Heart right ventricle (tissue), 16 donors: ENCODE measurements at regions of chr11 and their contacts with region 1.

Region 1: DNA sequence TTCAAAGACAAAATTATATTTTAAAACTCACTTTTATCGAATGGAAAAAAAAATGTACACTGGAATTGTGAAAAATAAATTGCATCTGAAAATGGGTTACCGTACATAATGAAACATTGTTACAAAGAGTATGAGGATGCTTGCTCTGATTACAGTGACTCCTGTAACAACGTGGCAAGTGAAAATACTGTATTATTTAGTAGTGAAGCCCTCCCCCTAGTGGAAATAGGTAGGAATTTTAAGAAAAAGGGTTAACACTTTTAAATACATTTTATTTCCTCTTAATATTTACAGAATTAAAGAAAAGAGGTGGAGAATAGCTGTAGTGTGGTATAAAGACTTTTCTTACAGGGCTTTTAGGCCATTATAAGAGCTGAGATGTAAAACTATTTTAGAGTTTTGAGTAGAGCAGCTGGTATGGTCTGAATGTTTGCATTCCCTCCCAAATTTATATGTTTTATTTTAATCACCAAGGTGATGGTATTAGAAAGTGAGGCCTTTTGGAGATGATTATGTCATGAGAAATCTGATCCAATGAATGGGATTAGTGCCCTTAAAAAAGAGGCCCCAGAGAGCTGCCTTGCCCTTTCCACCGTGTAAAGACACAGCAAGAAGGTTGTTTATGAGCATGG is 25.2 kb downstream of the FAM76B start:
- DNase-seq: no peak
- ATAC-seq: peak in 6 of 8 donors; percentile 50 to 74 (median 58)
- H3K4me3 ChIP-seq: no peak overlapping the region
- H3K27ac ChIP-seq: no peak overlapping the region
- H3K4me1 ChIP-seq: peaks cover 0 to 12% (median 0%) of the 10 kb centered on the region in 9 donors
- H3K27me3 ChIP-seq: peaks cover 0 to 5% (median 0%) of the 10 kb centered on the region in 7 donors
- CTCF ChIP-seq: peak; percentile 44 to 80 (median 74)

Region 2: DNA sequence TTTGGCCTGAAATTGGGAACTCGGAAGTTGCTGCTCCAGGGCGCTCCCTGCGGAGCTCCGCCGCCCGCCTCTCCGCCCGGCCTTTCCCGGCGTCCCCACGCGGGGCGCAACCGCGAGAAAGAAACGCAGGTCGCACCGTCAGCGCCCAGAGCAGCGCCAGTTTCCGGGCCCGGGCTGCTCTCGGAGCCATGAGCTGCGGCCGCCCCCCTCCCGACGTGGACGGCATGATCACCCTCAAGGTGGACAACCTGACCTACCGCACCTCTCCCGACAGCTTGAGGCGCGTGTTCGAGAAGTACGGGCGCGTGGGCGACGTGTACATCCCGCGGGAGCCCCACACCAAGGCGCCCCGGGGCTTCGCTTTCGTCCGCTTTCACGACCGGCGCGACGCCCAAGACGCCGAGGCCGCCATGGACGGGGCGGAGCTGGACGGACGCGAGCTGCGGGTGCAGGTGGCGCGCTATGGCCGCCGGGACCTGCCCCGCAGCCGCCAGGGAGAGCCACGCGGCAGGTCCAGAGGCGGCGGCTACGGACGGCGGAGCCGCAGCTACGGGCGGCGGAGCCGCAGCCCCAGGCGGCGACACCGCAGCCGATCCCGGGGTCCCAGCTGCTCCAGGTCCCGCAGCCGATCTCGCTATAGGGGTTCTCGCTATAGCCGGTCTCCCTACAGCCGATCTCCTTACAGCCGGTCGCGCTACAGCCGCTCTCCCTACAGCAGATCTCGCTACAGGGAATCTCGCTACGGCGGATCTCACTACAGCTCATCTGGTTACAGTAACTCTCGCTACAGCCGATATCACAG is 697.1 kb before region 1 on chr11:
- intact Hi-C with region 1: loop called in 7 of 10 experiments (anchors 5 to 10 kb)
- DNase-seq: peak; percentile 83 to 88
- ATAC-seq: peak; percentile 87 to 95 (median 90)
- H3K4me3 ChIP-seq: peak overlapping the region; percentile 72 to 89 (median 82)
- H3K27ac ChIP-seq: peak overlapping the region; percentile 94 to 99 (median 97)
- H3K4me1 ChIP-seq: peaks cover 0 to 27% (median 20%) of the 10 kb centered on the region in 9 donors
- H3K27me3 ChIP-seq: no peaks in the 10 kb centered on the region
- CTCF ChIP-seq: peak; percentile 50 to 77 (median 61)

Region 3: DNA sequence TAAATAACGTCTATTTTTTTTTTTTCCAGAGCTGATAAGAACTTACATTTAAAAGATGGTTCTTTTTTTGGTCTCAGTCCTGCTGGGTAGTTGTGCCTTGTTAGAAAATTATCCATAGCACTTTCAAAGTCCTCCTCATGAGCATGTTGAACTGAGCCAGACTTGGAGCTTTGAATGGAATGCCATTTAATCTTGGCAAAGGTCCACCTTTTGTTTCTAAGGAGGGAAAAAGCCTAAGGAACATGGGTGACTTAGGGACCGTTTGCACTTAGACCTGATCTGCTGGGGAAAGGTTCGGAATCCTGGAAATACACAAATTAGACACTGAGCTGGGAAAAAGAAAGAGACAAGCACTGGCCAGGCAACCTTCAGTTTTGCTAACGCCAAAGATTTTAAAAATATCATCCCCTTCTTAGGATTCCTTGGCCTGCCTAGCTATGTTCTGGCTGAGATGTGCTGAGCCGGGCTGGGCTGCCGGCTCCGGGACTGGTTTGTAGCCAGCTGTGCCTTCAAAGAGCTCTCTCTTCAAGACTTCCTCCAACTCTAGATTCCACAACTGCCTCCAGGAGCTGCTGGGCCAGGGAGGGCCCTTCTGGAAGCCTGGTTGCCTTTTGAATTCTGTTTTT is 607.4 kb before region 1 on chr11:
- intact Hi-C with region 1: loop called in 7 of 10 experiments (anchors 2 to 5 kb)
- DNase-seq: no peak
- ATAC-seq: peak in 7 of 8 donors; percentile 58 to 80 (median 71)
- H3K4me3 ChIP-seq: no peak overlapping the region
- H3K27ac ChIP-seq: peak overlapping the region in 7 of 10 donors; percentile 1 to 67 (median 41)
- H3K4me1 ChIP-seq: peaks cover 0 to 31% (median 15%) of the 10 kb centered on the region in 9 donors
- H3K27me3 ChIP-seq: no peaks in the 10 kb centered on the region
- CTCF ChIP-seq: no peak

Region 4: GRCh38 chr11:95705485-95706124 is 58.8 kb before region 1 on chr11:
- intact Hi-C with region 1: loop called in 2 of 10 experiments (anchors 5 to 10 kb)
- DNase-seq: peak; percentile 78 to 91
- ATAC-seq: peak; percentile 94 to 99 (median 98)
- H3K4me3 ChIP-seq: no peak overlapping the region
- H3K27ac ChIP-seq: peak overlapping the region in 8 of 10 donors; percentile 20 to 56 (median 34)
- H3K4me1 ChIP-seq: peaks cover 0 to 37% (median 10%) of the 10 kb centered on the region in 9 donors
- H3K27me3 ChIP-seq: no peaks in the 10 kb centered on the region
- CTCF ChIP-seq: peak; percentile 90 to 99 (median 96)

Region 5: DNA sequence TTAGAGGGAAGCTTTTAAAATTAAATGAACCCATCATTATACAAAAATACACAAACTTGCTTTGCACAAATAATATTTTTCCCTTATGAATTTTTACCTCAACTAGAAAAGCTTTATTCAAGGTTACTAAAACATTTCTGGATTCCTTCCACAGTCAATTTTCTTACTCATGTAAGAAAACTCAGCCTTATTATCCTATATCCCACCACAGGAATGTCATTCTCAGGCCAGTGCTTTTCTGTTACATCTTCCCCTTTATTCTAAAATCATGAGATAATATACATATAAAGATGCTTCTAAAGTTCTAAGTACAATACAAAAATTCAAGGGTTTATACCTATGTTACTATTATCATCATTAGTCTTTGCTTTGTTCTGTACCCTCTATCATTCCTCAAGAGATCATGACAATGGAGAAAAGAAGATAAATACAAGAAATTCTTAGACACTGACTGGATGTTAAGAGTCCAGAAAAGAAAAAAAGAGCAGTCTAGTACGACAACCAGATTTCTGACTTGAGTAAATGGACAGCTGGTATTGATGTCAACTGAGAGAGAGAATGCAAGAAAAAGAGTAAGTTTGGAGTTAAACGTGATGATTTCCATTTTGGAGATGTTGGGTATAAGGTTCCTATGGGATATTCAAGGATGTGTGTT is 99.2 kb after region 1 on chr11:
- intact Hi-C with region 1: no loop called
- DNase-seq: no peak
- ATAC-seq: no peak
- H3K4me3 ChIP-seq: no peak overlapping the region
- H3K27ac ChIP-seq: no peak overlapping the region
- H3K4me1 ChIP-seq: no peaks in the 10 kb centered on the region
- H3K27me3 ChIP-seq: no peaks in the 10 kb centered on the region
- CTCF ChIP-seq: no peak